HCT116 (cell line): ENCODE measurements at regions of chr11 and their contacts with region 1.

Region 1: GRCh38 chr11:8099291-8099899 is 18.4 kb downstream of the TUB start:
- DNase-seq: peak; percentile 68
- ATAC-seq: peak; percentile 94
- H3K4me3 ChIP-seq: no peak overlapping the region
- H3K27ac ChIP-seq: no peak overlapping the region
- H3K4me1 ChIP-seq: no peaks in the 10 kb centered on the region
- H3K27me3 ChIP-seq: no peaks in the 10 kb centered on the region
- CTCF ChIP-seq: peak; percentile 79 to 90 (median 84)
- POLR2A ChIP-seq: no peak
- RAD21 ChIP-seq: peak; percentile 90

Region 2: DNA sequence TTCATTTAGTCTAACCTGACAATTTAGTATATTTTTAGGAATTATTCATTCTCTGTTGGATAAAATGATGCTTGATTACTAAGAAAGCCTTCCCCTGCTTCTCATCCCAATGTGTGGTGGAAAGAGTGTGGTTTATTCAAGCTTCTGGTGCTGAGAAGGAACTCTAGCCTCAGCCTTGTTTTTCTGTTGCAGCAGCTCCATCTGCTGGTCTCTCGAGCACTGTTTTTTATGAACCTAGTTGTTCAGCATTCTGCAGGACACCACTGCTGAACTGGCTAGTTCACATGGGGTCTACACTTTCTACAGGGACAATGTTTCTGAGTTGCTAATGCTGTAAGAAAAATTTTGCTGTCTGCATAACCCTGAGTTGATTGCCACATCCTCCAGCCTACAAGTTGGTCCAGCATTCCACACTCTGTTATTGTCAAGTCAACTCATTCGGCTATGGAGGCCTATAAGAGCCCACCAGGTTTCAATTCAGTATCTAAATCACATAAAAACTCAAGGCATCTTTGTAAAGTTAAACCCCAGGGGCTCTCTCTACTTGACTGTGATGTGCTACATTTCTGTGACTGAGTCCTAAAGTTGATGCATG is 1341.9 kb before region 1 on chr11:
- CTCF ChIA-PET with region 1: interaction called, 11 read pairs
- POLR2A ChIA-PET with region 1: no interaction called
- RAD21 ChIA-PET with region 1: no interaction called
- intact Hi-C with region 1: no loop called
- DNase-seq: peak; percentile 32
- ATAC-seq: peak; percentile 89
- H3K4me3 ChIP-seq: no peak overlapping the region
- H3K27ac ChIP-seq: no peak overlapping the region
- H3K4me1 ChIP-seq: no peaks in the 10 kb centered on the region
- H3K27me3 ChIP-seq: no peaks in the 10 kb centered on the region
- CTCF ChIP-seq: peak; percentile 51 to 69 (median 61); a peak in 5 of 6 replicates
- POLR2A ChIP-seq: no peak
- RAD21 ChIP-seq: peak; percentile 60

Region 3: GRCh38 chr11:7555052-7555699 is 544.2 kb before region 1 on chr11:
- CTCF ChIA-PET with region 1: no interaction called
- POLR2A ChIA-PET with region 1: no interaction called
- RAD21 ChIA-PET with region 1: no interaction called
- intact Hi-C with region 1: loop called (anchors 10 kb)
- DNase-seq: no peak
- ATAC-seq: no peak
- H3K4me3 ChIP-seq: no peak overlapping the region
- H3K27ac ChIP-seq: no peak overlapping the region
- H3K4me1 ChIP-seq: no peaks in the 10 kb centered on the region
- H3K27me3 ChIP-seq: no peaks in the 10 kb centered on the region
- CTCF ChIP-seq: no peak
- POLR2A ChIP-seq: no peak
- RAD21 ChIP-seq: no peak

Region 4: GRCh38 chr11:7986768-7987559 is 112.4 kb before region 1 on chr11 and contains the start of gene EIF3F:
- CTCF ChIA-PET with region 1: interaction called, 16 read pairs
- POLR2A ChIA-PET with region 1: no interaction called
- RAD21 ChIA-PET with region 1: no interaction called
- intact Hi-C with region 1: no loop called
- DNase-seq: peak; percentile 100
- ATAC-seq: peak; percentile 97
- H3K4me3 ChIP-seq: peak within 1 kb of the TSS; percentile 93
- H3K27ac ChIP-seq: peak within 1 kb of the TSS; percentile 13; the same call in 1 of the 2 replicates
- H3K4me1 ChIP-seq: peaks cover 10 to 21% of the 10 kb centered on the region in 2 experiments; a peak in 3 of 4 replicates
- H3K27me3 ChIP-seq: no peaks in the 10 kb centered on the region
- CTCF ChIP-seq: peak; percentile 77 to 90 (median 77)
- POLR2A ChIP-seq: no peak
- RAD21 ChIP-seq: peak; percentile 83
- total RNA-seq, gene EIF3F: 313 TPM

Region 5: GRCh38 chr11:8033305-8034105 is 65.9 kb before region 1 on chr11:
- CTCF ChIA-PET with region 1: interaction called, 57 read pairs
- POLR2A ChIA-PET with region 1: no interaction called
- RAD21 ChIA-PET with region 1: interaction called in 1 of 2 experiments, 10 read pairs
- intact Hi-C with region 1: loop called (anchors 1 kb)
- DNase-seq: peak; percentile 43
- ATAC-seq: peak; percentile 95
- H3K4me3 ChIP-seq: peak overlapping the region in 1 of 2 experiments; percentile 13; a peak in 1 of 4 replicates
- H3K27ac ChIP-seq: no peak overlapping the region
- H3K4me1 ChIP-seq: peaks cover 0 to 10% of the 10 kb centered on the region in 2 experiments; a peak in 2 of 4 replicates
- H3K27me3 ChIP-seq: no peaks in the 10 kb centered on the region; the same call in 1 of the 2 replicates
- CTCF ChIP-seq: peak; percentile 82 to 89 (median 87)
- POLR2A ChIP-seq: no peak
- RAD21 ChIP-seq: peak; percentile 77

Region 6: GRCh38 chr11:8574798-8575197 is 475.4 kb after region 1 on chr11:
- CTCF ChIA-PET with region 1: no interaction called
- POLR2A ChIA-PET with region 1: no interaction called
- RAD21 ChIA-PET with region 1: no interaction called
- intact Hi-C with region 1: no loop called
- DNase-seq: no peak
- ATAC-seq: no peak
- H3K4me3 ChIP-seq: no peak overlapping the region
- H3K27ac ChIP-seq: no peak overlapping the region
- H3K4me1 ChIP-seq: peaks cover 0 to 3% of the 10 kb centered on the region in 2 experiments; a peak in 1 of 4 replicates
- H3K27me3 ChIP-seq: no peaks in the 10 kb centered on the region
- CTCF ChIP-seq: no peak
- POLR2A ChIP-seq: no peak
- RAD21 ChIP-seq: no peak